ENCODE measurements at regions of chr14 and their contacts with region 1.

Region 1: DNA sequence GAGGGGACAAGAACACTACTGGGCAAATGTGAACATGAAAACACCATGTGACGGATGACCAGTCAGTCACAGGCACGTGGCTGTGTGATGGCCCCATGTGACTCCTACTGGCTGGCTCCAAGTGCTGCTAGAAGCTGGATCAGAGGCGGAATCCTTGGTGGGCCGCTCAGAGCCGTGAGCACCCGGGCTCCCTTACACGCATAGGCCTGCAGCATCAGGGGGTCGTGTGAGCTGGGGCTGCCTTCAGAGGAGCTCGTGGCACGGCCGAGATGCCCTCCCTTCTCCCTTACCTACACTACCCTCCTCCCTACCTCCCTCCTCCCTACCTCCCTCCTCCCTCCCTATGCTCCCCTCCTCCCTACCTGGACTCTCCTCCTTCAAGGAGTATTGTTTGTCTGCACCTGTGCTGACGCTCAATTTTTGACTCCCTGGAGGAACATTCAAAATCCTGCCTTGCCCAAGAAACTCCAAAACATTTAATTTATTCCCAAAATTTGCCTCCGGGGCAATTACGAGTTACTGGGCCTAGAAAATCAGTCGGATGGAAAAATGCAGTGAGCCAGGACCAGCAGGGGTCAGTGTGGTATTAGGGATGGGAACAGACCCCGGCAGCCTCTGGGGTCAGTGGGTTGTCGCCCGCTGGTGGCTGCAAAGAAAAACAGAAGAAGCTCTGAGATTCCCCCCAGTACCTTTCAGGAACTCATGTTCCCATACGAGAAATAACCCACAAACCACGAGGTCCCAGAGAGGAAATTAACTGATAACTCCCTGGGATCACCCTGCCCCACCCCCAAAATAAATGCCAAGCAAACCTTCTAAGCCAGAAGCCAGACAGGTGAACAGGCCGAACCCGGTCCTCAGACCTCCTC is 61.2 kb downstream of the C14orf132 start:
- DNase-seq: peak; percentile 54
- H3K4me3 ChIP-seq: no peak overlapping the region
- H3K27ac ChIP-seq: no peak overlapping the region
- H3K4me1 ChIP-seq: no peaks in the 10 kb centered on the region
- H3K27me3 ChIP-seq: peaks cover 68% of the 10 kb centered on the region
- CTCF ChIP-seq: peak; percentile 73

Region 2: GRCh38 chr14:96001866-96002497 is 98.4 kb before region 1 on chr14:
- intact Hi-C with region 1: loop called (anchors 10 kb)
- DNase-seq: no peak
- H3K4me3 ChIP-seq: no peak overlapping the region
- H3K27ac ChIP-seq: no peak overlapping the region
- H3K4me1 ChIP-seq: no peaks in the 10 kb centered on the region
- H3K27me3 ChIP-seq: peaks cover 66% of the 10 kb centered on the region
- CTCF ChIP-seq: no peak

Region 3: GRCh38 chr14:96275177-96276112 is 175.1 kb after region 1 on chr14:
- intact Hi-C with region 1: loop called (anchors 5 kb)
- DNase-seq: peak; percentile 52
- H3K4me3 ChIP-seq: no peak overlapping the region
- H3K27ac ChIP-seq: no peak overlapping the region
- H3K4me1 ChIP-seq: peaks cover 7% of the 10 kb centered on the region
- H3K27me3 ChIP-seq: no peaks in the 10 kb centered on the region
- CTCF ChIP-seq: peak; percentile 95

Region 4: DNA sequence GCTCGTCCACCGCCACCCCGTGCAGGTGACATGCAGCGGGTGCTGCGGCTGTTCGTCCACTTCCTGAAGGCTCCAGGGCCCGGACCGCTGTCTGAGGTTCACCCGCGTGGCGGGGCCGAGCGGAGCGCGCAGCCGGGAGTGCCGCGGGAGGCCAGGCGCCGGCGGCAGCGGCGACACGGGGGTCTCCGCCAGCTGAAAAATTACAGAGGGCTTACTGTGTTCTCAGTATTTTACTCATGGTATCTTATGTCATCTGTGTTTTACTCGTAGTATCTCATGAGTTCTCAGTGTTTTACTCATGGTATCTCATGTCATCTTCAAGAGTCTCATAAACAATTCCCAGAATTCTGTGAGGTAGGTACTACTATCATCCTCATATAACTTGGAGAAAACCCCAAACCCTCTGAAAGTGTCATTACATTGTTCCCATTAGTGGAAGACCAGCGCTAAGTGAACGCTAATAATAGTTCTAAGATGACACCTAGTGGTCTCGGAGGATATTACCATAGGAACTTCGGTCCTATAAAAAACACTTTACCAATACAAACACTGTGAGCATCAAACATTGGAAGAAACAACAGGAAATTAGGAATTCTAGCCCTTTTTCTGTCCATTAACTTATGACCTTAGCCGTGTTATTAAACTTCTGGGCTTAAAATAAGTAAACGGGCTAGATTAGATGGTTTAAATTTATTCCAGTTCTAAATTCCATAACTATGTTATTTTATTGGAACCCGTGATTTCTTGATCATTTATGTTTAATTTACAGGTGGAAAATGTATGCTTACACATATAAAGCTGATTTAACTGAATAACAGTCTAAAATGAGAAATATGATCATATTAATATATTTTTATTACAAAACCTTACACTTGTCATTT is 324.0 kb after region 1 on chr14:
- intact Hi-C with region 1: loop called (anchors 10 kb)
- DNase-seq: no peak
- H3K4me3 ChIP-seq: peak overlapping the region; percentile 64
- H3K27ac ChIP-seq: no peak overlapping the region
- H3K4me1 ChIP-seq: peaks cover 13% of the 10 kb centered on the region
- H3K27me3 ChIP-seq: no peaks in the 10 kb centered on the region
- CTCF ChIP-seq: peak; percentile 82